Caco-2 (cell line): ENCODE measurements at regions of chr2 and their contacts with region 1.

Region 1: GRCh38 chr2:10584796-10585475 is 104.8 kb downstream of the NOL10 start:
- DNase-seq: peak; percentile 80 to 82
- H3K4me3 ChIP-seq: no peak overlapping the region
- H3K4me3 Mint-ChIP-seq: peak overlapping the region; percentile 52
- H3K27ac Mint-ChIP-seq: peak overlapping the region; percentile 91
- H3K4me1 ChIP-seq: peaks cover 22% of the 10 kb centered on the region
- H3K4me1 Mint-ChIP-seq: peaks cover 47% of the 10 kb centered on the region
- H3K27me3 ChIP-seq: no peaks in the 10 kb centered on the region
- H3K27me3 Mint-ChIP-seq: no peaks in the 10 kb centered on the region
- CTCF ChIP-seq: no peak

Region 2: GRCh38 chr2:9739531-9739964 is 845.4 kb before region 1 on chr2:
- CTCF ChIA-PET with region 1: no interaction called
- POLR2A ChIA-PET with region 1: no interaction called
- intact Hi-C with region 1: no loop called
- DNase-seq: no peak
- H3K4me3 ChIP-seq: no peak overlapping the region
- H3K4me3 Mint-ChIP-seq: no peak overlapping the region
- H3K27ac Mint-ChIP-seq: no peak overlapping the region
- H3K4me1 ChIP-seq: no peaks in the 10 kb centered on the region
- H3K4me1 Mint-ChIP-seq: no peaks in the 10 kb centered on the region
- H3K27me3 ChIP-seq: no peaks in the 10 kb centered on the region
- H3K27me3 Mint-ChIP-seq: no peaks in the 10 kb centered on the region
- CTCF ChIP-seq: no peak

Region 3: DNA sequence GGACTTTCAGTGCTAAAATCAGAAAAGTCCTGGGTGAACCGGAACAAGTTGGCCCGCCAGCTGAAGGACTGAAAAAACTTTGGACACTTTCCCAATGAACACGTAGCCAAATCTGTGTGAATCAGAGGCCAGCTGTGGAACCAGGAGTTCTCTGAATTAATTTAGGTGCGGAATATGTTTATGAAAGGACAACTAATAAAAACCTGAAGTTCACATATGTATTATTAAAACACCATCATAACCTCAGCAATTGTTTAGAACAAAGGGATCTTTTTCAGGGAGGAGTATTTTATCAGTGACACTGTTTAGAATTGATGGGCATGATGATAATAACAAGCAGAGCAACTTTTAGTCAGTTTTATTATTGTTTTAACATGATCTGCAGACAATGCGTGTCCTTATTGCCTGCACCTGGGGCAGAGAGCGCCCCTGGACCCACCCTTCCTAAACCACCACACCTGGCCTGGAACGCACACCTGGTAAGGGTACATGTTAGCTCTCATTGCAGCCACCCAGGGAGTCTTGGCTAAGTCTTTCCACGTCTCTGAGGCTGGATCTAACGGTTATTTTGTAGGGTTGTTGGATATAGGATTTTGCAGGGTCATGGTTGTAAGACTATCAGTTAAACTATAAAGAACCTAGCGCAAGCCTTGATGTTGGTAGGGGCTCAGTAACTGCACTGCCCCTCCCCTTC is 126.9 kb before region 1 on chr2:
- CTCF ChIA-PET with region 1: no interaction called
- POLR2A ChIA-PET with region 1: no interaction called
- intact Hi-C with region 1: no loop called
- DNase-seq: no peak
- H3K4me3 ChIP-seq: no peak overlapping the region
- H3K4me3 Mint-ChIP-seq: no peak overlapping the region
- H3K27ac Mint-ChIP-seq: no peak overlapping the region
- H3K4me1 ChIP-seq: peaks cover 7% of the 10 kb centered on the region; the same call in 1 of the 2 replicates
- H3K4me1 Mint-ChIP-seq: peaks cover 11% of the 10 kb centered on the region
- H3K27me3 ChIP-seq: no peaks in the 10 kb centered on the region
- H3K27me3 Mint-ChIP-seq: no peaks in the 10 kb centered on the region
- CTCF ChIP-seq: no peak

Region 4: DNA sequence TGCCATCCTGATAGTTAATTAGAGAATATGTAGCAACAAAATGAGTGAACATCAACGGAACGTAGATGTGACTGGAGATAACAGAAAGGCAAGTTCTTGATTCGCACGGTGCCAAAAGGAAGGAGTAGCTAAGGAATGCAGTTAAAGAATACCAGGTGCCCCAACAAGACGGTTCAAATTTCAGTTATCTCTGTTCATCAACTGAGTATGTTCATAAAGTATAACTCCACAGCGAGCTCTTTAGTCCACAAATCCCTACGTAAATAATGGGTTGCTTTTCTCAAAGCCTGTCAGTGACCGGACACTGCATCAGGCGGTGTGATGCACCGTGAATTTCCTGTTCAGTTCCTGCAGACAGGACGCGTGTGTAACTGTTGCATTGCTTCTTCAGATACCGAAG is 13.0 kb after region 1 on chr2:
- CTCF ChIA-PET with region 1: no interaction called
- POLR2A ChIA-PET with region 1: no interaction called
- intact Hi-C with region 1: loop called (anchors 2 kb)
- DNase-seq: peak in 1 of 2 experiments; percentile 34
- H3K4me3 ChIP-seq: no peak overlapping the region
- H3K4me3 Mint-ChIP-seq: peak overlapping the region; percentile 39
- H3K27ac Mint-ChIP-seq: peak overlapping the region; percentile 72
- H3K4me1 ChIP-seq: peaks cover 46% of the 10 kb centered on the region
- H3K4me1 Mint-ChIP-seq: peaks cover 33% of the 10 kb centered on the region
- H3K27me3 ChIP-seq: no peaks in the 10 kb centered on the region
- H3K27me3 Mint-ChIP-seq: no peaks in the 10 kb centered on the region
- CTCF ChIP-seq: no peak

Region 5: GRCh38 chr2:10610213-10610910 is 25.4 kb after region 1 on chr2:
- CTCF ChIA-PET with region 1: no interaction called
- POLR2A ChIA-PET with region 1: no interaction called
- intact Hi-C with region 1: loop called (anchors 1 kb)
- DNase-seq: peak; percentile 40 to 74
- H3K4me3 ChIP-seq: no peak overlapping the region
- H3K4me3 Mint-ChIP-seq: no peak overlapping the region
- H3K27ac Mint-ChIP-seq: peak overlapping the region; percentile 6
- H3K4me1 ChIP-seq: peaks cover 13% of the 10 kb centered on the region
- H3K4me1 Mint-ChIP-seq: no peaks in the 10 kb centered on the region
- H3K27me3 ChIP-seq: no peaks in the 10 kb centered on the region
- H3K27me3 Mint-ChIP-seq: no peaks in the 10 kb centered on the region
- CTCF ChIP-seq: no peak

Region 6: GRCh38 chr2:10634495-10634894 is 49.6 kb after region 1 on chr2:
- CTCF ChIA-PET with region 1: no interaction called
- POLR2A ChIA-PET with region 1: no interaction called
- intact Hi-C with region 1: loop called (anchors 2 kb)
- DNase-seq: peak; percentile 62 to 69
- H3K4me3 ChIP-seq: no peak overlapping the region
- H3K4me3 Mint-ChIP-seq: peak overlapping the region; percentile 38
- H3K27ac Mint-ChIP-seq: peak overlapping the region; percentile 48
- H3K4me1 ChIP-seq: peaks cover 48% of the 10 kb centered on the region
- H3K4me1 Mint-ChIP-seq: peaks cover 31% of the 10 kb centered on the region
- H3K27me3 ChIP-seq: no peaks in the 10 kb centered on the region
- H3K27me3 Mint-ChIP-seq: no peaks in the 10 kb centered on the region
- CTCF ChIP-seq: no peak